ENCODE measurements at regions of chr5 and their contacts with region 1.

Region 1: GRCh38 chr5:52915176-52915875 is 73.8 kb upstream of the ITGA2 start:
- DNase-seq: no peak

Region 2: DNA sequence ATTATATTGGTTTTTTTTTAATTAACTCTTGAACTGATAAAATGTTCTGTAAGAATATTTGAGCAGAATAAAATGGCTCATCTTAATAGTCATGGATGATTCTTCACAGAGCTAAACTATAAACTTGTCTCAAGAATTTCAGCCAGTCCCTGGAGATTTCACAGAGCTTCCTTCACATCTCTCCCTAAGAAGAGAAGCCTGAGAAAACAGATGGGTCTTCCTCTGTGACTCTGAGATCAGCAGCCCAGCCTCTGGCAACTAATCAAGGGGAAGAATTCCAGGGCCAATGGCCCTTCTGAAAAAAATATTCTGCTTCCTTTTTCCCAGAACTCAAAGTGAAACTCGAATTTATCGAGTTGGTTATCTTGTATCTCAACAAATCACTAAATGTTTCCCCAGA is 249.8 kb before region 1 on chr5:
- intact Hi-C with region 1: loop called (anchors 10 kb)
- DNase-seq: no peak

Region 3: GRCh38 chr5:52693280-52693679 is 222.0 kb before region 1 on chr5:
- intact Hi-C with region 1: loop called (anchors 5 kb)
- DNase-seq: peak; percentile 73